Activated B cell treated with CpG ODN at 0.5 μM for 24 hours (primary cell): ENCODE measurements at regions of chr1 and their contacts with region 1.

Region 1: DNA sequence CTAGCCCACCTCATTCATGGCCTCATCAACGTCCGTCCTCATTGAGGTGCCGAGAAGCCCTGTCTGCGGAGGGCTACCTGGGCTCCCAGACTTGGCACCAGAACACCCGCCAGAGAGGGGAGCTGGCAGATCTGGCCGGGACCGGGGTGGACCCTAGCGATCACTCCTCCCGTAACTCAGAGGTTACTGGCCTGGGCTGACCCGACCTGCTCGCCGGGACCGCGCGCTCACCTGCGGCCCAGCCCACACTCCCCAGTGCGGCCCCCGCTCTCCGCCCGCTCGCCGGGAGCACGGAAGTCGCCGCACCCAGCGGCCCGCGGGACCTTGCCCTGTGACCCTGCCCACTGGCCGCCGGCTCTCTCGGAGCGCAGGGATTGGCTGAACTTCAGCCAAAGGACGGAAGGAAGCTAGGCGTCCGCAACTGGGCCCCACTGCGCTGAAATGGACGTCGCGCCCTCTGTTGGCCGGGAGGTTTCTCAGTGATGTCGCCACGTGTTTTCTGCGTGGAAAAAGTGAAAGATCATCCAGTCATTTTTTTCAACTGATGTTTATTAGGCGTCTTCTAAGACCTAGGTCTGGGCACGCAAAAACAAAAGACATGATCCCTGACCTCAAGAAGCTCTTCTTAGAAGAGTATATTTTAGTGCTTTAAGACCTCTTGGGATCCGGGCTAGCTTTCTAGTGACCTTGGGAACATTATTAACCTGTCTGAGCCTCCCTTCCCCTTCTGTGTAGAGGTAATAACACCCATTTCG is at the start of gene SMIM12:
- DNase-seq: peak; percentile 81
- ATAC-seq: peak; percentile 98
- H3K4me3 Mint-ChIP-seq: peak within 1 kb of the TSS; percentile 94
- H3K27ac Mint-ChIP-seq: peak within 1 kb of the TSS; percentile 82
- H3K4me1 Mint-ChIP-seq: peaks cover 34% of the 10 kb centered on the region
- H3K27me3 Mint-ChIP-seq: no peaks in the 10 kb centered on the region
- CTCF ChIP-seq: no peak
- total RNA-seq, gene SMIM12: 45.9 and 46.3 TPM in 2 replicates

Region 2: GRCh38 chr1:34879230-34879629 is 19.6 kb after region 1 on chr1:
- CTCF ChIA-PET with region 1: no interaction called
- POLR2A ChIA-PET with region 1: no interaction called
- intact Hi-C with region 1: no loop called
- DNase-seq: no peak
- ATAC-seq: no peak
- H3K4me3 Mint-ChIP-seq: no peak overlapping the region
- H3K27ac Mint-ChIP-seq: no peak overlapping the region
- H3K4me1 Mint-ChIP-seq: no peaks in the 10 kb centered on the region
- H3K27me3 Mint-ChIP-seq: peaks cover 5% of the 10 kb centered on the region
- CTCF ChIP-seq: no peak

Region 3: GRCh38 chr1:34984793-34985608 is 125.4 kb after region 1 on chr1 and contains the start of gene TMEM35B:
- CTCF ChIA-PET with region 1: interaction called, 4 read pairs
- POLR2A ChIA-PET with region 1: interaction called, 19 read pairs
- intact Hi-C with region 1: loop called (anchors 1 kb)
- DNase-seq: peak; percentile 74
- ATAC-seq: peak; percentile 87
- H3K4me3 Mint-ChIP-seq: peak within 1 kb of the TSS; percentile 97
- H3K27ac Mint-ChIP-seq: peak within 1 kb of the TSS; percentile 89
- H3K4me1 Mint-ChIP-seq: peaks cover 43% of the 10 kb centered on the region
- H3K27me3 Mint-ChIP-seq: no peaks in the 10 kb centered on the region
- CTCF ChIP-seq: no peak
- total RNA-seq, gene TMEM35B: 16.7 and 20.0 TPM in 2 replicates

Region 4: DNA sequence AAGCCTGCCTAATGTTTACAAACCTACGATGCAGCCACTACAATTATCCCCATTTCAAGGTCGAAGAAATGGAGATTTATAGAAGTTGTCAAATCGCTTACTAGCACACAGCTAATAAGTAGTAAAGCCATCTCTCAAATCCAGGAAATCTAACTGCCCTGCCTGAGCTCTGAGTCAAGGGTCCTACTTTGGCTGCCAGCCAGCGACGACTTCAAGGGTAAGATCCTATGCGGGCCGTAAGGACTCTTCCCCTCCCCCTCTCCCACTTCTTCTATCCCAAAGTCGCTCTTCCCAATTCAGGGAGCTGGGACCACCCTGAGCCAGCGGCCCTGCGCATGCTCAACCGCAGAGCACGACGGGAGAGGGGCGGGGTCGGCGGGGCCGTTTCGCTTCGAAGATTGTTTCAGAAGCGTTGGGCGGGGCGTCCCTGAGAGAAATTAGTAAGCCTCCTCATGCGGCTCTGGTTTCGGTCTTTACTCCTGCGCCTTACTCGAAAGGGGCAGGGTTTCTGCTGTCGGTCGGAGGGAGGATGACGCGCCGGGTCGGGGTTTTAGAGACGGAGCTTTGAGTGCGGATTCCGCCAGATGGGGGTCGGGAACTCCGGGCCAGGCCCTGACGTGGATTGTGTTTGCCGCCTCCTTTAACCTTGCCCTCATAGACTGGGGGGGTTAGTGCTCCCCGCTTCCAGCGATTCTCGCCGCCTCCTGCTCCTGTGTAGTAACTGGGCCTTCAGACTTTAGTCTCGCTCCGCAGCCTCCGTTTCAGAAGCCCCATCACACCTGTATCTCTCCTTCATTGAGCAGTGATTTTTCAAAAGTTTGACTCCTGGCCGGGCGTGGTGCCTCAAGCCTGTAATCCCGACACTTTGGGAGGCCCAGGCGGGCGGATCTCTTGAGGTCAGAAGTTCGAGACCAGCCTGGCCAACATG is 219.6 kb after region 1 on chr1 and contains the start of gene ZMYM1:
- CTCF ChIA-PET with region 1: no interaction called
- POLR2A ChIA-PET with region 1: interaction called, 8 read pairs
- intact Hi-C with region 1: loop called (anchors 2 kb)
- DNase-seq: peak; percentile 88
- ATAC-seq: peak; percentile 96
- H3K4me3 Mint-ChIP-seq: peak within 1 kb of the TSS; percentile 95
- H3K27ac Mint-ChIP-seq: peak within 1 kb of the TSS; percentile 98
- H3K4me1 Mint-ChIP-seq: peaks cover 21% of the 10 kb centered on the region
- H3K27me3 Mint-ChIP-seq: peaks cover 4% of the 10 kb centered on the region
- CTCF ChIP-seq: no peak
- total RNA-seq, gene ZMYM1: 7.4 and 9.0 TPM in 2 replicates

Region 5: DNA sequence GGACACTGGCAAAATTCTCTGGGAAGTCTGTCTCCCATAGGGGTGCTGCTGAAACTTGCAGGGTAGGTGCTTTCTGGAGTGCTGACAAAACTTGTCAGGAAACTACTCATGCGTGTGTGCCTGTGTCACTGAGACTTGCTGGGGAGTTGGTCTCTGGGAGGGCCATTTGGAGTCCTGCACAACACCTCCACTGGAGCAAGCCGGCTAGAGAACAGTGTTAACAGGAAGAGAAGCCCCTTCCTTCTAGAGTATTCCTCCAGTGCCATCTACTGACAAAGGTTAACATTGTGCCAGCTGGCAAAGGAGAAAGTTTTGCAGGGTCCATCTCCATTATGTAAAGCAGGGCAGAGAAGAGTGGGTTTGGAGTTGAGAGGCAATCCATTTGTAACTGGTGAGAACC is 438.8 kb after region 1 on chr1:
- CTCF ChIA-PET with region 1: no interaction called
- POLR2A ChIA-PET with region 1: no interaction called
- intact Hi-C with region 1: loop called (anchors 5 kb)
- DNase-seq: no peak
- ATAC-seq: peak; percentile 81
- H3K4me3 Mint-ChIP-seq: no peak overlapping the region
- H3K27ac Mint-ChIP-seq: no peak overlapping the region
- H3K4me1 Mint-ChIP-seq: peaks cover 7% of the 10 kb centered on the region
- H3K27me3 Mint-ChIP-seq: no peaks in the 10 kb centered on the region
- CTCF ChIP-seq: no peak